Mammary epithelial cell (primary cell): ENCODE measurements at regions of chr15 and their contacts with region 1.

Region 1: GRCh38 chr15:79494963-79495746 is 63.0 kb downstream of the MINAR1 start:
- DNase-seq: no peak
- H3K4me3 ChIP-seq: no peak overlapping the region
- H3K27ac ChIP-seq: no peak overlapping the region
- H3K4me1 ChIP-seq: no peaks in the 10 kb centered on the region
- H3K27me3 ChIP-seq: no peaks in the 10 kb centered on the region
- CTCF ChIP-seq: no peak

Region 2: DNA sequence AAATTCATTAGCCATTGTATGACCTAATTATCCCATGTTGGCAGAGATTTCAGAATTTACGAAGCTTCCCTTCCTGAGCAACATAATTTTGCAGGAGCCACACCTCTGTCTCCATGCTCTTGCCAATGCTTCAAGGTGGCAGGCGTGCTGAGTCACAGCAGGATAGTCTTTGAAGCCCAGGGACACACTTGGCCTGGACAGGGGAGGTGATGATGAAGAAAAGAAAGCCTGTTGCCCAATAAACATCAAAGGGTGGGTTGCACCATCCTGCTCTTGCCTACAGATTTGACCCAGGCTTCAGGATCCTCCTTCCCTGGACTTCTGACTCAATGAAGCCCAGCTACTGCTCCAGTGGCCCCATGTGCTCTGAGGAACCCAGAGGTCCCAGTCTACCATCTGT is 54.0 kb after region 1 on chr15:
- CTCF ChIA-PET with region 1: no interaction called
- dilution Hi-C with region 1: loop called (anchors 5 kb)
- in situ Hi-C with region 1: no loop called
- intact Hi-C with region 1: no loop called
- DNase-seq: no peak
- H3K4me3 ChIP-seq: no peak overlapping the region
- H3K27ac ChIP-seq: no peak overlapping the region
- H3K4me1 ChIP-seq: no peaks in the 10 kb centered on the region
- H3K27me3 ChIP-seq: no peaks in the 10 kb centered on the region
- CTCF ChIP-seq: no peak

Region 3: GRCh38 chr15:79572691-79573404 is 77.7 kb after region 1 on chr15:
- CTCF ChIA-PET with region 1: no interaction called
- dilution Hi-C with region 1: loop called (anchors 5 kb)
- in situ Hi-C with region 1: no loop called
- intact Hi-C with region 1: no loop called
- DNase-seq: no peak
- H3K4me3 ChIP-seq: no peak overlapping the region
- H3K27ac ChIP-seq: no peak overlapping the region
- H3K4me1 ChIP-seq: no peaks in the 10 kb centered on the region
- H3K27me3 ChIP-seq: no peaks in the 10 kb centered on the region
- CTCF ChIP-seq: no peak